ENCODE measurements at regions of chr15 and their contacts with region 1.

Region 1: DNA sequence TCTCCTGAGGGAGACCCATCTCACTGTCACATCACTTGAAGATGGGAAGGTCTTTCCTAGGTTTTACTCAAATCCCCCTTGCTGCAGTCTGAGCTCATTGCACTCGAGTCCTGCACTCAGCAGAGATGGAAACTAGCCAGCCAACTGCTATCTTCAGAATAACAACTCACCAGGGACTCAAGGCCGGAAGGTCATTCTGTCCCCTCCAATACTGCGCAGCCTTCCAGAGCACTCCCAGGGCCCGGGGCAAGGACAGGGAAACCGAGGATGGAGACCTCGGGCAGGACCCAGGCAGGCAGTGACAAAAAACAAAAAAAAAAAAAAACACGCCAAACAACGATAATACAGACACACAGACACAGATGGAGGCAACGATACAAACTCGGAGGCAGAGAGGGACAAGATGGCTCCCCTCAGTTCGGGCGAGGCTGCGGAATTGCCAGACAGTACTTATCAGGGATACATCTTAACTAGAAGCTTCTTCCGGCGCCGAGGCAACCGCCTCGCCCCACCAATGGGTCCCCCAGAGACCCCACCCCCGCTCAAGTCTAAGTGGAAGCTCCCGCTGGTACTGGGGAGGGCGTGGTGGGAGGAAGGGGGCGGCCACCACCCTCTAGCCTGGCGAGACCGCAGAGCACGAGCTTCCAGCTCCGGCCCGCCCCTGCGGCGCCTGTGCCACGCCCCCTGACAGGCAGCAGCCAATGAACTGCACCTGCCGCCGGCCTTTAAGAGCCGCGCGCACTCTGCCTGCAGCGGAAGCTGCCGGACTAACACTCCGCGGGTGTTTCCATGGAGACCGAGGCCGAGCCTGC is 7.0 kb upstream of the MAP1A start:
- DNase-seq: peak; percentile 98
- ATAC-seq: peak; percentile 97 to 98 (median 98)
- H3K4me3 ChIP-seq: peak overlapping the region; percentile 42 to 74 (median 64)
- H3K27ac ChIP-seq: peak overlapping the region; percentile 79 to 95 (median 90)
- H3K4me1 ChIP-seq: peaks cover 14 to 63% (median 40%) of the 10 kb centered on the region in 9 donors
- H3K27me3 ChIP-seq: peaks cover 0 to 6% (median 0%) of the 10 kb centered on the region in 7 donors
- CTCF ChIP-seq: peak in 8 of 9 donors; percentile 20 to 63 (median 48)

Region 2: GRCh38 chr15:43370975-43371974 is 139.1 kb before region 1 on chr15 and contains the starts of genes TUBGCP4 and ZSCAN29:
- intact Hi-C with region 1: loop called in 1 of 10 experiments (anchors 10 kb)
- DNase-seq: peak; percentile 75 to 87
- ATAC-seq: peak; percentile 95 to 98 (median 96)
- H3K4me3 ChIP-seq: peak within 1 kb of the TSS; percentile 59 to 100 (median 94)
- H3K27ac ChIP-seq: peak within 1 kb of the TSS; percentile 9 to 92 (median 79)
- H3K4me1 ChIP-seq: peaks cover 10 to 44% (median 27%) of the 10 kb centered on the region in 9 donors
- H3K27me3 ChIP-seq: no peaks in the 10 kb centered on the region
- CTCF ChIP-seq: peak in 5 of 9 donors; percentile 18 to 42 (median 33)
- total RNA-seq, gene TUBGCP4: 9.0 to 14.9 (median 12.1) TPM
- total RNA-seq, gene ZSCAN29: 9.6 to 15.7 (median 12.2) TPM

Region 3: DNA sequence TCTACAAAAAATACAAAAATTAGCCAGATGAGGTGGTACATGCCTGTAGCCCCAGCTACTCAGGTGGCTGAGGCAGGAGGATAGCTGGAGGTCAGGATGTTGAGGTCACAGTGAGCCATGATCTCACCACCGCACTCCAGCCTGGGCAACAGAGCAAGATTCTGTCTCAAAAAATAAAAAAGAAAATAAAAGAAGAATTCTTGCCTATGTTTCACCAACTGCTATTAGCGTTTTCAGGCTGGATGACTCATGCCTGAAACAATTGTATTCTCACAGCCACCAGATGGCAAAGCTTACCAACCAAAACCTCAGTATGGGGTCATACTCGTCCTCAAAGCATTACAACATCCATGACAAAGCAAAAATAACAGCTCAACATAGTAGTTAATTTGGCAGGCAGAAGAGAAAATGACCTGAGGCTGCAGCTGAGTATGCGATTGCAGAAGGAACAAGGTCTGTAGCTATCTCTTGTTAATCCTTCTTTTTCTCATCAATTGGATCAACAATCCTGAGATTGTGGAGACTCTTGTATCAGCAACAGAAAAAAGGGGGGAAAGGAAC is 69.6 kb before region 1 on chr15:
- intact Hi-C with region 1: loop called in 3 of 10 experiments (anchors 5 to 10 kb)
- DNase-seq: peak in 1 of 2 donors; percentile 34
- ATAC-seq: peak; percentile 86 to 97 (median 93)
- H3K4me3 ChIP-seq: no peak overlapping the region
- H3K27ac ChIP-seq: peak overlapping the region in 8 of 10 donors; percentile 2 to 73 (median 60)
- H3K4me1 ChIP-seq: peaks cover 0 to 14% (median 9%) of the 10 kb centered on the region in 9 donors
- H3K27me3 ChIP-seq: no peaks in the 10 kb centered on the region
- CTCF ChIP-seq: peak in 8 of 9 donors; percentile 9 to 59 (median 47)

Region 4: DNA sequence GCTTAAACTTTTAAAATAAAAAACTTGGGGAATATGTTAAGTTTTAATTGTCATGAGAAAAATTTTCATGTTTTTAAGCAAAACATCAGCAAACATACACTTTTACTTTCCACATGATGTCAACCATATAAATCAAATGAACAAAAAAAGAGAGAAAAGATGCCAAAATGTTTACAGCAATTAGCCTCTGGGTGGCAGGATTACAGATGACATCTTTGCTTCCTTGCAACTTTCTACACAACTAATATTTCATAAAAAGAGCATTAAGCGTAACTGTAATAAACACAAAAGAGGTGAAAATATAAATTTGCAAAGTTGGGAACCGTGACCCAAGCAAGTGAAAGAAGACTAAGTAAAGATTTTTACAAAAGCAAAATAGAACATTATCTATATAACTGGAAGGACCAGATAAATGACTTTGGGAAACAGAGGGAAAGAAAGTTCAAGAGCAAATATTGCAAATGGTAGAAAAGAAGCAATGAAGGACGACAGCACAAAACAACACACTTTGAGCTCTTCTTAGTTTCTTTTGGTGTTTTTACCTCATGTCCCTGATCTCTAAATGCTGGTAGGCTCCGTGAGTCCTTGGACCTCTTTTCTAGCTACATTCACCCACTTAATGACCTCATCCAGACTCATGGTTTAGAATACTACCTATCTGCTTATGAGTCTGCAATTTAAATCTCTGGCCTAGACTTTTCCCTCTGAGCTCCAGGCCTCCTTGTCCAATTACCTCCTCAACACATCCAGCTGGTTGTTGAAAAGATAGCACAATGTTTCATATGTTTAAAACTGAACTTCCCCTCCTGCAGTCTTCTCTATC is 26.9 kb before region 1 on chr15:
- intact Hi-C with region 1: loop called in 2 of 10 experiments (anchors 5 kb)
- DNase-seq: no peak
- ATAC-seq: no peak
- H3K4me3 ChIP-seq: no peak overlapping the region
- H3K27ac ChIP-seq: peak overlapping the region in 2 of 10 donors; percentile 3 to 8
- H3K4me1 ChIP-seq: peaks cover 0 to 15% (median 4%) of the 10 kb centered on the region in 9 donors
- H3K27me3 ChIP-seq: no peaks in the 10 kb centered on the region
- CTCF ChIP-seq: peak in 7 of 9 donors; percentile 21 to 60 (median 46)

Region 5: GRCh38 chr15:43492673-43493601 is 17.5 kb before region 1 on chr15 and contains the start of gene TP53BP1:
- intact Hi-C with region 1: loop called in 4 of 10 experiments (anchors 2 kb)
- DNase-seq: peak; percentile 96 to 98
- ATAC-seq: peak; percentile 99 to 100 (median 100)
- H3K4me3 ChIP-seq: peak within 1 kb of the TSS; percentile 61 to 96 (median 75)
- H3K27ac ChIP-seq: peak within 1 kb of the TSS in 9 of 10 donors; percentile 30 to 88 (median 79)
- H3K4me1 ChIP-seq: peaks cover 0 to 27% (median 21%) of the 10 kb centered on the region in 9 donors
- H3K27me3 ChIP-seq: no peaks in the 10 kb centered on the region
- CTCF ChIP-seq: peak in 1 of 9 donors; percentile 6
- total RNA-seq, gene TP53BP1: 21.2 to 35.2 (median 29.3) TPM

Region 6: GRCh38 chr15:44144184-44144583 is 633.8 kb after region 1 on chr15:
- intact Hi-C with region 1: no loop called
- DNase-seq: no peak
- ATAC-seq: peak in 5 of 8 donors; percentile 29 to 92 (median 59)
- H3K4me3 ChIP-seq: no peak overlapping the region
- H3K27ac ChIP-seq: peak overlapping the region in 1 of 10 donors; percentile 55
- H3K4me1 ChIP-seq: peaks cover 0 to 26% (median 4%) of the 10 kb centered on the region in 9 donors
- H3K27me3 ChIP-seq: no peaks in the 10 kb centered on the region
- CTCF ChIP-seq: no peak